Motor neuron (in vitro differentiated cells): ENCODE measurements at regions of chr10 and their contacts with region 1.

Region 1: GRCh38 chr10:60032723-60033122 is 126.4 kb upstream of the CCDC6 start:
- ATAC-seq: peak in 4 of 8 experiments; percentile 45 to 80 (median 63)
- H3K4me3 ChIP-seq: no peak overlapping the region
- H3K27ac ChIP-seq: no peak overlapping the region
- H3K4me1 ChIP-seq: no peaks in the 10 kb centered on the region

Region 2: DNA sequence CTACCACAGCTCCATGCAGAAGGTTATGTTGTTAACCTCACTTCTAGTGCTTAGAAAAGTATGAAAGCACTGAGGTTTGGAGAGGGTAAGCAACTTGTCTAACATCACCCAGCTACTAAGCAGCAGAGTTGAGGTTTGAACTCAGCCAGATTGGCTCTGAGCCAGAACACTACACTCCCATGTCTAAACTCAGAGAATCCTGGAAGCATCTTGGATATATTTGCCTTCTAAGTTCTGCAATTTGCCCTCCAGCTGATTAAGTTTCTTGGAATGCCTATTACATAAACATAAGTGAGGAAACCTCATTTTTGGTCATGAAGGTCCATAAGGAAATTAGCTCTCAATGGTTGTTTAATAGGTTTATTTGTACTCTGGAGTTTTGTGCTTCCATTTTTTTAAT is 934.3 kb before region 1 on chr10:
- in situ Hi-C with region 1: no loop called
- ATAC-seq: peak in 3 of 8 experiments; percentile 27 to 39 (median 37)
- H3K4me3 ChIP-seq: no peak overlapping the region
- H3K27ac ChIP-seq: no peak overlapping the region
- H3K4me1 ChIP-seq: peaks cover 3 to 9% of the 10 kb centered on the region in 2 donors

Region 3: GRCh38 chr10:59625721-59626522 is 406.8 kb before region 1 on chr10:
- in situ Hi-C with region 1: loop called in 3 of 9 experiments (anchors 25 kb)
- ATAC-seq: peak; percentile 75 to 96 (median 94)
- H3K4me3 ChIP-seq: no peak overlapping the region
- H3K27ac ChIP-seq: no peak overlapping the region
- H3K4me1 ChIP-seq: peaks cover 3 to 5% of the 10 kb centered on the region in 2 donors

Region 4: GRCh38 chr10:59830601-59831259 is 202.0 kb before region 1 on chr10:
- in situ Hi-C with region 1: loop called in 2 of 9 experiments (anchors 25 kb)
- ATAC-seq: peak in 5 of 8 experiments; percentile 45 to 77 (median 70)
- H3K4me3 ChIP-seq: no peak overlapping the region
- H3K27ac ChIP-seq: no peak overlapping the region
- H3K4me1 ChIP-seq: no peaks in the 10 kb centered on the region

Region 5: DNA sequence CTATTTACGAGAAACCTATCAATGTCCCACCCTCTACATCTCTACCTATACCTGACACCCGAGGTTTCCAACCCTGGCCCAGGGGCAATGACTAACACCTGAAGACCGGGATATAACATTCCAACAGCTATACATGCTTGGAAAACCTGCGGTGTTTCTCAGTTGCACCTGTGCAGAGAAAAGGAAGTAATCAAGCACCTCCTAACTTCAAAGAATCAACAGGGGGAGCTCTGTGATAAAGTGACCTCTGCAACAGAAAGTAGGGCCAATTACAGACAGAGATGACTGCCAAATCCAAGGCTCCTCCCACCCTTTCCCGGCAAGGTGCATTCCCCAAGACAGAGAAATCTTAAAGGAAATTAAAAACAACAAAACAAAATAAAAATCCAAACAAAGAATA is 167.6 kb before region 1 on chr10:
- in situ Hi-C with region 1: loop called in 1 of 9 experiments (anchors 25 kb)
- ATAC-seq: peak in 2 of 8 experiments; percentile 52 to 53
- H3K4me3 ChIP-seq: no peak overlapping the region
- H3K27ac ChIP-seq: no peak overlapping the region
- H3K4me1 ChIP-seq: no peaks in the 10 kb centered on the region

Region 6: DNA sequence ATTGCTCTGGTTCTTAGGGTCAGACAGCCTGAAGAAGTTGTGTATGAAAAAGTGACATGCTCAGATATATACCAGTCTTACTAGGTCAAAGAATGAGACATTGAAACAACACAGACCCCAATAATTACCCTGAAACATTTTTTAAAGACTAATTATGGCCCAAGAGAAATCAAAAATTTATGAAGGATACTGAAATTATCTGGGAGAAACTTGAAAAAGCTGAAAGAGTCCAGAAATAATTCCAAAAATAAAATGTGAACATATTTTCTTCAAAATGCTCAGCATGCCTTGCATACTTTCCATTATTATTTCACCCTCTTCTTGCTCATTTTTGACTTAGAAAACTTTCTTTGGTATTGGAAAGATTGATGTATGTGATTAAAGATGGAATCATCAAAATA is 72.6 kb after region 1 on chr10:
- in situ Hi-C with region 1: no loop called
- ATAC-seq: no peak
- H3K4me3 ChIP-seq: no peak overlapping the region
- H3K27ac ChIP-seq: no peak overlapping the region
- H3K4me1 ChIP-seq: peaks cover 0 to 2% of the 10 kb centered on the region in 2 donors

Region 7: DNA sequence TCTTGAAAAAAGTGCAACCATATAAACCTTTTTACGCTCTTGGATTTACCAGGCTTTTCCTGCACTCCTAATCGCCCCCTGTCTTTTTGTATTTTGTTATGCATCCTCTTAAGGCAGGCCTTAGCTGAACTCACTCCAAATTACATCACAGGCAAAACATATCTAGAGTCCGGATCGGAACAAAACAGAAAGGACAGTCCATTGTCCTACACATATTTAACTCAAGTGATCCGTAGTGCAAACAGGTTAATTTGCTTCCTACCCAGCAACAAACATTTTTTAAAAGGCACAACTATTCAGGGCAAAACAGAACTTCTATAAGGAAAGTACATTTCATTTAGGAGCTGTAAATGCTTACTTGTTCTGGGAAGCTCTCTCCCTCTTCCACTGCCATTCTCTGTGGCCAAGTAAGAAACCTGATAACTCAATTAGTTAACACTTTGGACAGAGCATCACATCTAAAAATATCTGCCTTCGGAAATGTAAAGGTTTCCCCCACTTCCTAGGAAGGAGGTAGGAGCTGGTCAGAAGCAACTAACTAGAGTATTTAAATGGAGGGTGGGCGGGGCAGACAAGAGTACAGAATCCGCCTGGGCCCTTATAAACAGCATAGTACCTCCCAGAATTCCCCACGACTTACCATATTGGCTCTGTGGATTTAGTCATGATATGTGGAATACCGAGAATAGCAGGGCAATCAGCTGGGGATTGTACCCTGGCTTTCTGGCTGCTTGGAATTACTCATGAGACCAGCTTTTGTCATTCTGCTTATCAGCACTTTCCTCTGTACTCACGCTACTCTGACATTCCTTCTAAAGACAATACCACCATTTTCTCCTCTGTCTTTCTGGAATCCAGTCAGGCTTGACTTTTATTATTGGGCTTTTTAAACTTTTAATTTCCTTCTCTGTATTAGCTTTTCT is 267.5 kb after region 1 on chr10:
- in situ Hi-C with region 1: no loop called
- ATAC-seq: peak in 6 of 8 experiments; percentile 71 to 97 (median 94)
- H3K4me3 ChIP-seq: peak overlapping the region in 3 of 5 donors; percentile 5 to 26 (median 25)
- H3K27ac ChIP-seq: peak overlapping the region in 1 of 2 donors; percentile 26
- H3K4me1 ChIP-seq: peaks cover 6 to 26% of the 10 kb centered on the region in 2 donors

Region 8: DNA sequence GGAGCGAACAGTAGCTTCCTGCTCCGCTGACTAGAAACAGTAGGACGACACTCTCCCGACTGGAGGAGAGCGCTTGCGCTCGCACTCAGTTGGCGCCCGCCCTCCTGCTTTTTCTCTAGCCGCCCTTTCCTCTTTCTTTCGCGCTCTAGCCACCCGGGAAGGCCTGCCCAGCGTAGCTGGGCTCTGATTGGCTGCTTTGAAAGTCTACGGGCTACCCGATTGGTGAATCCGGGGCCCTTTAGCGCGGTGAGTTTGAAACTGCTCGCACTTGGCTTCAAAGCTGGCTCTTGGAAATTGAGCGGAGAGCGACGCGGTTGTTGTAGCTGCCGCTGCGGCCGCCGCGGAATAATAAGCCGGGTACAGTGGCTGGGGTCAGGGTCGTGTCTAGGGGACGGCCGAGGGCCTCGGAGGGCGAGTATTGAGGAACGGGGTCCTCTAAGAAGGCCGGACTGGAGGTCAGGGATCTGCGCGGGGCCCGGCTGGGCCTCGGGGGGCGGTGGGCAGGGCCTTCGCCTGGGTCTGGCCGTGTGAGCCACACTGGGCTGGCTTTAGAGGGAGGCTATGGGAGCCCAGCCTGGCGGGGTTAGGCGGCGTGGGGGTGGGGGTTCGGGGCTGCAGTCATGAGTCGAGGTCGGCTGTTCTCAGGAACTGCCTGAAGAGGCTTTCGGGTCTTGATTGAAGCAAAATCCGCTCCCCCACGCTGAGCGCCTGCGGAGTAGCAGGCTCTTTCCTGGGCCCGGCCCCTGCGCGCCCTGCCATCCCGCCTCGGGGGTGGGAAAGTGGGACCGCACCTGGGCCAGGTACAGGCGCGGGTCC is 745.7 kb after region 1 on chr10 and contains the start of gene CDK1:
- in situ Hi-C with region 1: no loop called
- ATAC-seq: peak; percentile 98 to 100 (median 99)
- H3K4me3 ChIP-seq: peak within 1 kb of the TSS; percentile 43 to 81 (median 54)
- H3K27ac ChIP-seq: peak within 1 kb of the TSS in 1 of 2 donors; percentile 55
- H3K4me1 ChIP-seq: peaks cover 3 to 9% of the 10 kb centered on the region in 2 donors
- total RNA-seq, gene CDK1: 0.31 to 77.5 (median 4.2) TPM